H1 (cell line): ENCODE measurements at regions of chr16 and their contacts with region 1.

Region 1: GRCh38 chr16:66872943-66873684 is 7.2 kb upstream of the PDP2 start:
- DNase-seq: peak; percentile 86 to 92
- H3K4me3 ChIP-seq: peak overlapping the region; percentile 17 to 64 (median 48); a peak in 7 of 8 replicates
- H3K27ac ChIP-seq: peak overlapping the region; percentile 52; the same call in 1 of the 2 replicates
- H3K4me1 ChIP-seq: peaks cover 0 to 6% (median 2%) of the 10 kb centered on the region in 4 experiments; a peak in 4 of 7 replicates
- H3K27me3 ChIP-seq: no peaks in the 10 kb centered on the region; a peak in 1 of 7 replicates
- CTCF ChIP-seq: peak; percentile 76 to 89 (median 88)
- EP300 ChIP-seq: no peak
- POLR2A ChIP-seq: peak in 1 of 2 experiments; percentile 58; a peak in 1 of 3 replicates
- RAD21 ChIP-seq: peak; percentile 21 to 54

Region 2: DNA sequence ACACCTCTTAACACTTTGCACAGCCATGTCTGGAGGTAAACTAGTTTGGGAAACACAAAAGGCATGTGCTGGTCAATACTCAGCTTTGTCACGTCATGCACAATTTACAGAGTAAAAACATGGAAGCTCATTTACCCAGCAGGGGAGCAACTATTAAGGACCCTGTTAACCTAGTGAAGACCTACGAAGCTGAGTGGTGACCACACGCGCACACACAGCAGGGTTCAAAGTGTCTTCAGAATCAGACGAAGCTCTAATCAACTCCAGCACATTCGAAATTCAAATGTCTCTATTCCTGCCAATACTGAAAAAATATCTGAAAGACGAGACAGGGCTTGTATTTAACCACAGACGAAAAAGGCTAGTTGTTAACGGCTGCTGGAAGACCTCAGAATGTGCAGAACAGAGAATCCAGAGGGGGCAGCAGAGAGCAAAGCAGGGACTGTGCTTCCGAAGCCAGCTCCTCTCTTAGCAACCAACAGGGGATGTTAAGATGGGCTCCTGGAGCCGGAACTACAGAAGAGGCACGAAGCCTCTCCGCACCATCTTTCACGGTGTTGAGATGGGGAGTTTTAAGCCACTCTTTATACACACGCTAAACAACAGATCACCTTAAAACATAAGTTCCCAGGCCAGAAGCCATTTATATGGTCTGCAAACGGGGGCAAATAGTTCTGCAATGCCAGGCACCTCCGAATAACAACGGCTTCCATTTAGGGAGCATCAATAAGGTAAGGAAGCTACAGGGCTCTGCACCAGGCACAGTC is 222.2 kb before region 1 on chr16:
- CTCF ChIA-PET with region 1: interaction called, 11 read pairs
- POLR2A ChIA-PET with region 1: no interaction called
- DNase-seq: peak; percentile 68 to 89
- H3K4me3 ChIP-seq: peak overlapping the region in 3 of 4 experiments; percentile 5 to 47 (median 27); a peak in 4 of 8 replicates
- H3K27ac ChIP-seq: no peak overlapping the region
- H3K4me1 ChIP-seq: peaks cover 0 to 5% (median 3%) of the 10 kb centered on the region in 4 experiments; a peak in 3 of 7 replicates
- H3K27me3 ChIP-seq: no peaks in the 10 kb centered on the region
- CTCF ChIP-seq: peak; percentile 80 to 98 (median 96)
- EP300 ChIP-seq: no peak
- POLR2A ChIP-seq: no peak
- RAD21 ChIP-seq: peak; percentile 53 to 69; a peak in 3 of 4 replicates

Region 3: GRCh38 chr16:66786551-66786950 is 86.6 kb before region 1 on chr16:
- CTCF ChIA-PET with region 1: interaction called, 10 read pairs
- POLR2A ChIA-PET with region 1: no interaction called
- DNase-seq: no peak
- H3K4me3 ChIP-seq: no peak overlapping the region
- H3K27ac ChIP-seq: no peak overlapping the region
- H3K4me1 ChIP-seq: no peaks in the 10 kb centered on the region
- H3K27me3 ChIP-seq: no peaks in the 10 kb centered on the region
- CTCF ChIP-seq: no peak
- EP300 ChIP-seq: no peak
- POLR2A ChIP-seq: no peak
- RAD21 ChIP-seq: no peak

Region 4: GRCh38 chr16:66830422-66831404 is 42.4 kb before region 1 on chr16 and contains the start of gene NAE1:
- CTCF ChIA-PET with region 1: interaction called, 81 read pairs
- POLR2A ChIA-PET with region 1: interaction called, 19 read pairs
- DNase-seq: peak; percentile 79 to 95
- H3K4me3 ChIP-seq: peak within 1 kb of the TSS; percentile 66 to 86 (median 84)
- H3K27ac ChIP-seq: peak within 1 kb of the TSS; percentile 93
- H3K4me1 ChIP-seq: peaks cover 0 to 5% (median 3%) of the 10 kb centered on the region in 4 experiments; a peak in 2 of 7 replicates
- H3K27me3 ChIP-seq: no peaks in the 10 kb centered on the region; a peak in 2 of 7 replicates
- CTCF ChIP-seq: peak; percentile 97 to 99 (median 98)
- EP300 ChIP-seq: peak in 1 of 2 experiments; percentile 28; a peak in 1 of 3 replicates
- POLR2A ChIP-seq: peak; percentile 91 to 95
- RAD21 ChIP-seq: peak; percentile 69 to 73
- total RNA-seq, gene NAE1: 145 and 155 TPM in 2 replicates

Region 5: DNA sequence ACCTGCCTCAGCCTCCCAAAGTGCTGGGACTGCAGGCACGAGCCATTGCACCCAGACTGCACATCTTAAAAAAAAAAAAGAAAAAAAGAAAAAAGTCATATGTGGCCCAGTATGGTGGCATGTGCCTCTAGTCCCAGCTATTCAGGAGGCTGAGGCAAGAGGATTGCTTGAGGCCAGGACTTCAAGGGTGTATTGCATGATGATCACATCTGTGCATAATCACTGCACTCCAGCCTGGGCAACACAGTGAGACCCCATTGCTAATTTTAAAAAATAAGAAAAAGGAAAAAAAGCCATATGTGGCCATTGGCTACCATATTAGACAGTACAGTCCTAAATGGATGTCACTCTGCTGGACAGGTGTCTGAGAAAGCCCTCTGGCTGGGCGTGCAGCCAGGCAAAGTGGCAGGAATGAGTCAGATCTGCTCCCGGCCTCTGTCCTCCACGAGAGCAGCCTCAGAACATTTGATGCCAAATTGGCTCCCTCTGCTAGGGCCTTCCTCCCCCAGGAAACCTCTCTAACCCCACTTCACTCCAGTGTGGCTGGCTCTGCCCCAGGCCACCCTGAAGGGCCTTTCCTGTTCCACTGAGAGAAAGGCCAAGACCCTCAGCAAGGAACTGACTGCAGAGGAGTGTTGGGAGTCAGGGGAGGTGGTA is 14.2 kb before region 1 on chr16:
- CTCF ChIA-PET with region 1: interaction called, 80 read pairs
- POLR2A ChIA-PET with region 1: interaction called, 6 read pairs
- DNase-seq: no peak
- H3K4me3 ChIP-seq: no peak overlapping the region
- H3K27ac ChIP-seq: no peak overlapping the region
- H3K4me1 ChIP-seq: no peaks in the 10 kb centered on the region
- H3K27me3 ChIP-seq: no peaks in the 10 kb centered on the region
- CTCF ChIP-seq: no peak
- EP300 ChIP-seq: no peak
- POLR2A ChIP-seq: no peak
- RAD21 ChIP-seq: no peak